B cell (primary cell): ENCODE measurements at regions of chr17 and their contacts with region 1.

Region 1: GRCh38 chr17:81890447-81891299 is 713 bp downstream of the ALYREF start:
- DNase-seq: peak; percentile 55
- ATAC-seq: no peak
- H3K4me3 ChIP-seq: peak overlapping the region; percentile 4 to 71 (median 62)
- H3K4me3 Mint-ChIP-seq: peak overlapping the region; percentile 83
- H3K27ac ChIP-seq: peak overlapping the region; percentile 34 to 83
- H3K27ac Mint-ChIP-seq: peak overlapping the region; percentile 88
- H3K4me1 ChIP-seq: peaks cover 10 to 25% of the 10 kb centered on the region in 2 donors
- H3K4me1 Mint-ChIP-seq: peaks cover 19% of the 10 kb centered on the region
- H3K27me3 ChIP-seq: no peaks in the 10 kb centered on the region
- H3K27me3 Mint-ChIP-seq: no peaks in the 10 kb centered on the region
- CTCF ChIP-seq: no peak

Region 2: GRCh38 chr17:81440876-81441244 is 449.8 kb before region 1 on chr17:
- CTCF ChIA-PET with region 1: no interaction called
- POLR2A ChIA-PET with region 1: no interaction called
- intact Hi-C with region 1: no loop called
- DNase-seq: no peak
- ATAC-seq: no peak
- H3K4me3 ChIP-seq: no peak overlapping the region
- H3K4me3 Mint-ChIP-seq: no peak overlapping the region
- H3K27ac ChIP-seq: no peak overlapping the region
- H3K27ac Mint-ChIP-seq: no peak overlapping the region
- H3K4me1 ChIP-seq: peaks cover 0 to 8% of the 10 kb centered on the region in 2 donors
- H3K4me1 Mint-ChIP-seq: peaks cover 4% of the 10 kb centered on the region
- H3K27me3 ChIP-seq: peaks cover 0 to 14% (median 0%) of the 10 kb centered on the region in 4 experiments
- H3K27me3 Mint-ChIP-seq: peaks cover 3% of the 10 kb centered on the region
- CTCF ChIP-seq: no peak

Region 3: DNA sequence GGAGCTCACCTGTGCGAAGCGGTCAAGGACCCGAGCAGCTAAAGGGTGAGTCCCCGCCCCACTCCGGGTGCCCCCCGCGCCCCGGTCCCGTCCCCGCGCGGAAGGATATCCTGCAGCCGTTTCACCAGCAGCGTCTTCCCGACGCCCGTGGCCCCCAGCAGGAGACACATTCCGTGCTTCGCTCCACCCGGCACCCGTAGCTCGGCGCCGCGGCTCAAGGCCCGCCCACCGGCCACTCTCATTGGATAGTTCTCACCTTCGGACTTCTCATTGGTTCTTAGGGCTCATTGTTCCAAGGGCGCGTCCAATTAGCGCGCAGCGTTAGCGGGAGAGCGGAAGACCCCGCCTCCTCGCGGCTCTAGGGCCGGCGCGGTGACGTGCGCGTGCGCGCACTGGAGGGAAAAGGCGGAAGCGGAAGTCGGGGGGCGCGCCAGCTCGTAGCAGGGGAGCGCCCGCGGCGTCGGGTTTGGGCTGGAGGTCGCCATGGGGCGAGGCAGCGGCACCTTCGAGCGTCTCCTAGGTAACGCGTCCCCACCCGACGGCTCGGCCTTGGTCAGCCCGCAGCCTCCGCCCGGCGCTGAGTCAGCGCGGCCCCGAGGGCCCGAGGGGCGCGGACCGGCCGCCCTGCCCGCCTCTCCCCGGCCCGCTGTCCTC is 207.0 kb before region 1 on chr17 and contains the starts of genes ARL16 and HGS:
- CTCF ChIA-PET with region 1: interaction called, 3 read pairs
- POLR2A ChIA-PET with region 1: interaction called, 3 read pairs
- intact Hi-C with region 1: loop called (anchors 1 kb)
- DNase-seq: peak; percentile 100
- ATAC-seq: peak; percentile 98
- H3K4me3 ChIP-seq: peak within 1 kb of the TSS; percentile 58 to 94 (median 93)
- H3K4me3 Mint-ChIP-seq: peak within 1 kb of the TSS; percentile 91
- H3K27ac ChIP-seq: peak within 1 kb of the TSS; percentile 53 to 83
- H3K27ac Mint-ChIP-seq: peak within 1 kb of the TSS; percentile 95
- H3K4me1 ChIP-seq: peaks cover 22 to 25% of the 10 kb centered on the region in 2 donors
- H3K4me1 Mint-ChIP-seq: peaks cover 33% of the 10 kb centered on the region
- H3K27me3 ChIP-seq: no peaks in the 10 kb centered on the region
- H3K27me3 Mint-ChIP-seq: no peaks in the 10 kb centered on the region
- CTCF ChIP-seq: no peak
- total RNA-seq, gene ARL16: 32.5 and 35.3 TPM in 2 replicates
- total RNA-seq, gene HGS: 184 and 190 TPM in 2 replicates

Region 4: GRCh38 chr17:81702971-81703746 is 187.5 kb before region 1 on chr17 and contains the start of gene MRPL12:
- CTCF ChIA-PET with region 1: no interaction called
- POLR2A ChIA-PET with region 1: no interaction called
- intact Hi-C with region 1: loop called (anchors 1 kb)
- DNase-seq: peak; percentile 94
- ATAC-seq: peak; percentile 95
- H3K4me3 ChIP-seq: peak within 1 kb of the TSS; percentile 45 to 98 (median 68)
- H3K4me3 Mint-ChIP-seq: peak within 1 kb of the TSS; percentile 90
- H3K27ac ChIP-seq: peak within 1 kb of the TSS; percentile 57 to 97
- H3K27ac Mint-ChIP-seq: peak within 1 kb of the TSS; percentile 91
- H3K4me1 ChIP-seq: peaks cover 24 to 32% of the 10 kb centered on the region in 2 donors
- H3K4me1 Mint-ChIP-seq: peaks cover 33% of the 10 kb centered on the region
- H3K27me3 ChIP-seq: no peaks in the 10 kb centered on the region
- H3K27me3 Mint-ChIP-seq: no peaks in the 10 kb centered on the region
- CTCF ChIP-seq: peak; percentile 36
- total RNA-seq, gene MRPL12: 23.8 and 24.1 TPM in 2 replicates

Region 5: DNA sequence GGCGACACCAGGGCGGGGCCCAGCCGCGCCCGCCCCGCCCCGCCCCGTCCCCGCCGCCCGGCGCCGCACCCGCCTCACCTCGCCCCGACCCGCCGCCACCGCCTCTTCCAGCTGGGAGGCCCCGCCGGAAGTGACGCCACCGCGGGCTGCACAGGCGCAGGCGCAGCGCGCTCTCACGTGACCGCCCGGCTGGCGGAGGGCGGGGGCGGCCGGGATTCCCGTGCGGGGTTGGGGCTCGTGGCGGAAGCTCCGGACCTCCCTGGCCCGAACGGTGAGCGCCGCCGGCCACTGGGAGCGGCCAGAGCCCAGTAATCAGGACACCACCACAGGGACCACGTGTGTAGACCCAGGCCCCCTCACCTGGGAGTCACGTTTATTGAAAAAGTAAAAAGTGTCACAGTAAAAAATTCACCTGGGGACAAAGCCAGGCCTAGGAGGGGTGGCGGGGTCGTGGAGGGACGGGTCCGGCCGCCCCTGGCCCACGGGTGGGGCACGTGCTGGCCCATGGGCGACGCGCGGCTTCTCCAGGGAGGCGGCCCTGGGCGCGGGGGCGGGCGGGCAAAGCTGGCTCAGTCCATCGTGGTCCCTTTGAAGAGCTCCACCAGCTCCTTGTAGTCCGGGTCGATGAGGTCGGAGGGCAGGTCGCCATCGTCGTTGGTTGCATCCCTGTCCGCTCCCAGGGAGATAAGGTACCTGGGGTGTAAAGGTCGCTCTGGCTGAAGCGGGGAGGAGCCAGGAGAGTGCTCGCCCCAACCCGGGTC is 57.3 kb before region 1 on chr17 and contains the start of gene MCRIP1:
- CTCF ChIA-PET with region 1: no interaction called
- POLR2A ChIA-PET with region 1: no interaction called
- intact Hi-C with region 1: loop called (anchors 1 kb)
- DNase-seq: peak; percentile 96
- ATAC-seq: peak; percentile 85
- H3K4me3 ChIP-seq: peak within 1 kb of the TSS; percentile 21 to 80 (median 78)
- H3K4me3 Mint-ChIP-seq: peak within 1 kb of the TSS; percentile 97
- H3K27ac ChIP-seq: peak within 1 kb of the TSS; percentile 85 to 98
- H3K27ac Mint-ChIP-seq: peak within 1 kb of the TSS; percentile 95
- H3K4me1 ChIP-seq: peaks cover 18 to 20% of the 10 kb centered on the region in 2 donors
- H3K4me1 Mint-ChIP-seq: peaks cover 23% of the 10 kb centered on the region
- H3K27me3 ChIP-seq: no peaks in the 10 kb centered on the region
- H3K27me3 Mint-ChIP-seq: no peaks in the 10 kb centered on the region
- CTCF ChIP-seq: no peak
- total RNA-seq, gene MCRIP1: 69.7 and 74.3 TPM in 2 replicates

Region 6: GRCh38 chr17:81844327-81844851 is 46.3 kb before region 1 on chr17:
- CTCF ChIA-PET with region 1: no interaction called
- POLR2A ChIA-PET with region 1: no interaction called
- intact Hi-C with region 1: no loop called
- DNase-seq: no peak
- ATAC-seq: no peak
- H3K4me3 ChIP-seq: no peak overlapping the region
- H3K4me3 Mint-ChIP-seq: no peak overlapping the region
- H3K27ac ChIP-seq: no peak overlapping the region
- H3K27ac Mint-ChIP-seq: no peak overlapping the region
- H3K4me1 ChIP-seq: no peaks in the 10 kb centered on the region
- H3K4me1 Mint-ChIP-seq: no peaks in the 10 kb centered on the region
- H3K27me3 ChIP-seq: no peaks in the 10 kb centered on the region
- H3K27me3 Mint-ChIP-seq: no peaks in the 10 kb centered on the region
- CTCF ChIP-seq: no peak

Region 7: DNA sequence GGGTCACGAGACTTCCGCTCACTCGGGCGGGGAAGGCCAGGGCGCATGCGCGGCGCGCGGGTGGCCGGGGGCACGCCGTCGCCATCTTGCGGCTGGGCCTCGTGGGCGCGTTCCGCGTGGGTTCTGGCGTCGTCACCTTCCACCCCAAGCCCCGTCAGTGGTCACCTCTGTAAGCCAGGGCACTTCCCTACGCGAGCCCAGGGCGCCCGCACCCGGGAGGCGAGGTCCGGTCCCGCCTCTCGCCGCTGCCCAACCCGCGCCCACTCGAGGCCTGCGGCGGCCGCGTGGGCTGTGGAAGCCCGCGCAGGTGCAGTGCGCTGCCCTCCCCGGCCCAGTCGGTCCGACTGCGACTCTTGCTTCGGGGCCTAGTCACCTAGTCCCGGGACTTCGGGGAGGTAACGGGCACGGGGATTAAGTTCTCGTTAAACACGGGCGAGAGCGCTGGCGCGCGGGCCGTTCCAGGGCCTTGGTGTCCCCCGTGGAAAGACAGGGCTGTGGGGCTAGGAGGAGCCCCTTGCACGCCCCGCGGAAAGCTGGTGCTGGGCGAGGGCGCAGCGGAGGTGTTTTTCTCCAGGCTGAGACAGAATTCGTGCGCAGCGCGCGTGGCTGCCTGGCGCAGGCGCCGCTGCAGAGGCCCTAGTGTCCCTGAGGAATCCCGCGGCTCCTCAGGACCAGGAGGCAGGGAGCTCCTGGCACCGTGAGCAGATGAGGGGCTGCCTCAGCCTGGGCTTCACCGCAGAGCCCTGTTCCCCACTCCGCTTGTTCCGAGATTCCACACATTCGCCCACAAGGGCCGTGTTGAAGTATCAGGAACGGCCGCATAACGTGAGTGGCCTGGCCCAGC is 19.1 kb before region 1 on chr17:
- CTCF ChIA-PET with region 1: interaction called, 4 read pairs
- POLR2A ChIA-PET with region 1: interaction called, 3 read pairs
- intact Hi-C with region 1: loop called (anchors 1 kb)
- DNase-seq: peak; percentile 96
- ATAC-seq: peak; percentile 2
- H3K4me3 ChIP-seq: peak overlapping the region; percentile 27 to 90 (median 84)
- H3K4me3 Mint-ChIP-seq: peak overlapping the region; percentile 89
- H3K27ac ChIP-seq: peak overlapping the region; percentile 90 to 99
- H3K27ac Mint-ChIP-seq: peak overlapping the region; percentile 98
- H3K4me1 ChIP-seq: peaks cover 22 to 39% of the 10 kb centered on the region in 2 donors
- H3K4me1 Mint-ChIP-seq: peaks cover 32% of the 10 kb centered on the region
- H3K27me3 ChIP-seq: no peaks in the 10 kb centered on the region
- H3K27me3 Mint-ChIP-seq: no peaks in the 10 kb centered on the region
- CTCF ChIP-seq: peak; percentile 50

Region 8: GRCh38 chr17:81911277-81911961 is 20.7 kb after region 1 on chr17 and contains the start of gene PCYT2:
- CTCF ChIA-PET with region 1: no interaction called
- POLR2A ChIA-PET with region 1: no interaction called
- intact Hi-C with region 1: loop called (anchors 1 kb)
- DNase-seq: peak; percentile 94
- ATAC-seq: peak; percentile 95
- H3K4me3 ChIP-seq: peak within 1 kb of the TSS; percentile 43 to 75 (median 65)
- H3K4me3 Mint-ChIP-seq: peak within 1 kb of the TSS; percentile 86
- H3K27ac ChIP-seq: peak within 1 kb of the TSS in 1 of 2 donors; percentile 59
- H3K27ac Mint-ChIP-seq: peak within 1 kb of the TSS; percentile 63
- H3K4me1 ChIP-seq: peaks cover 10 to 19% of the 10 kb centered on the region in 2 donors
- H3K4me1 Mint-ChIP-seq: peaks cover 15% of the 10 kb centered on the region
- H3K27me3 ChIP-seq: no peaks in the 10 kb centered on the region
- H3K27me3 Mint-ChIP-seq: no peaks in the 10 kb centered on the region
- CTCF ChIP-seq: no peak
- total RNA-seq, gene PCYT2: 34.2 and 34.9 TPM in 2 replicates